ENCODE measurements at regions of chr14 and their contacts with region 1.

Region 1: GRCh38 chr14:74571901-74572725 is 39.9 kb downstream of the LTBP2 start:
- DNase-seq: no peak
- H3K4me3 Mint-ChIP-seq: peak overlapping the region; percentile 22
- H3K27ac Mint-ChIP-seq: peak overlapping the region; percentile 82
- H3K4me1 Mint-ChIP-seq: peaks cover 26% of the 10 kb centered on the region
- H3K27me3 Mint-ChIP-seq: peaks cover 19% of the 10 kb centered on the region

Region 2: GRCh38 chr14:74618078-74618952 is 46.2 kb after region 1 on chr14:
- intact Hi-C with region 1: loop called (anchors 5 kb)
- DNase-seq: peak; percentile 83
- H3K4me3 Mint-ChIP-seq: peak overlapping the region; percentile 51
- H3K27ac Mint-ChIP-seq: peak overlapping the region; percentile 69
- H3K4me1 Mint-ChIP-seq: peaks cover 57% of the 10 kb centered on the region
- H3K27me3 Mint-ChIP-seq: peaks cover 25% of the 10 kb centered on the region